ENCODE measurements at regions of chr3 and their contacts with region 1.

Region 1: GRCh38 chr3:110314512-110315114 is 757.0 kb upstream of the NECTIN3 start:
- DNase-seq: peak; percentile 81
- H3K4me3 ChIP-seq: no peak overlapping the region
- H3K27ac ChIP-seq: no peak overlapping the region
- H3K4me1 ChIP-seq: peaks cover 25% of the 10 kb centered on the region
- H3K27me3 ChIP-seq: no peaks in the 10 kb centered on the region
- CTCF ChIP-seq: peak; percentile 85

Region 2: DNA sequence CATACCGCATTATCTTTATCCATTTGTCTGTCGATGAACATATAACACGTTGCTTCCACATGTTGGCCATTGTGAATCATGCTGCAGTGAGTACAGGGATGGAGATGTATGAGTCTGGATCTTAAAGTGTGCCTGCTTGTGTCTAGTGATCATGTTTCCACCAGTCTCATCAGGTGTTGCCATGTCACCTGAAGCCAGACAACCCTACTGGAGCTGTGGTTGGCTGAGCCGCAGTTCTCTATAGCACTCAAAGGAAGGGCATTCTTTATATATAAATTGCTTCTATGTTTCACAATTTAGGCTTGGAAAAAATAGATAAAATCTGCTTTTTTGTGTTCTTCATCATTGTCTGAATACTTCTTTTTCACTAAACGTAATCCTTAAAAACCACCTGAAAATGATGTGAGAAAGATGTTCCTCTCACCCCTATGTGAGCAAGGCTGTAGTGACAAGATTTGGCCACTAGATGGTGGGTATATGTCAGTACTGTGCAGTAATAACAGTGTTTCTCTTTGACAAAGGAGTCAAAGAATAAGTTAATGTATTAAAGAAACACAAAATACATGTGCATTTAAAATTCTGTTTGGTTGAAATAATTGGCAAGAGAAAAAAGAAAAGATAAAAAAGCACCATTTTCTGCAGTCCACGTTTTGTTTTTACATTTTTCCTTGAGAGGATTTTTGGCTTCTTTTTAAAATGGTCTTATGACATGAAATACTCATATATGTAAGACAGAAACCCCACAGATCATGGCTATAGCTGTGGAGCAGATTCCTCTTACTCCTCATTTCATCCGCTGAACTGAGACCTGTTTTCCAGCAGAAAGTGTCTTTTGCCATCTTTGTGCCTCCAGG is 582.8 kb before region 1 on chr3:
- CTCF ChIA-PET with region 1: no interaction called
- POLR2A ChIA-PET with region 1: no interaction called
- intact Hi-C with region 1: loop called (anchors 5 kb)
- DNase-seq: peak; percentile 58
- H3K4me3 ChIP-seq: no peak overlapping the region
- H3K27ac ChIP-seq: no peak overlapping the region
- H3K4me1 ChIP-seq: no peaks in the 10 kb centered on the region
- H3K27me3 ChIP-seq: no peaks in the 10 kb centered on the region
- CTCF ChIP-seq: peak; percentile 83

Region 3: GRCh38 chr3:110666495-110667128 is 352.0 kb after region 1 on chr3:
- CTCF ChIA-PET with region 1: no interaction called
- POLR2A ChIA-PET with region 1: no interaction called
- intact Hi-C with region 1: no loop called
- DNase-seq: no peak
- H3K4me3 ChIP-seq: no peak overlapping the region
- H3K27ac ChIP-seq: no peak overlapping the region
- H3K4me1 ChIP-seq: no peaks in the 10 kb centered on the region
- H3K27me3 ChIP-seq: no peaks in the 10 kb centered on the region
- CTCF ChIP-seq: no peak

Region 4: GRCh38 chr3:111071257-111072015 is 756.8 kb after region 1 on chr3 and contains the start of gene NECTIN3:
- CTCF ChIA-PET with region 1: no interaction called
- POLR2A ChIA-PET with region 1: no interaction called
- intact Hi-C with region 1: loop called (anchors 10 kb)
- DNase-seq: peak; percentile 95
- H3K4me3 ChIP-seq: peak within 1 kb of the TSS; percentile 59
- H3K27ac ChIP-seq: peak within 1 kb of the TSS; percentile 78
- H3K4me1 ChIP-seq: peaks cover 7% of the 10 kb centered on the region
- H3K27me3 ChIP-seq: peaks cover 13% of the 10 kb centered on the region
- CTCF ChIP-seq: no peak
- total RNA-seq, gene NECTIN3: 9.4 and 11.7 TPM in 2 replicates